CD4-positive, alpha-beta T cell (primary cell): ENCODE measurements at regions of chr7 and their contacts with region 1.

Region 1: GRCh38 chr7:86978808-86979506 is 80.5 kb downstream of the ELAPOR2 start:
- DNase-seq: peak in 6 of 14 experiments; percentile 5 to 90 (median 58)
- ATAC-seq: peak; percentile 90
- H3K4me3 ChIP-seq: no peak overlapping the region
- H3K4me3 Mint-ChIP-seq: peak overlapping the region; percentile 5
- H3K27ac ChIP-seq: peak overlapping the region; percentile 36 to 47
- H3K27ac Mint-ChIP-seq: peak overlapping the region; percentile 86
- H3K4me1 ChIP-seq: peaks cover 21% of the 10 kb centered on the region
- H3K4me1 Mint-ChIP-seq: peaks cover 54% of the 10 kb centered on the region
- H3K27me3 ChIP-seq: no peaks in the 10 kb centered on the region
- H3K27me3 Mint-ChIP-seq: no peaks in the 10 kb centered on the region
- CTCF ChIP-seq: no peak

Region 2: GRCh38 chr7:86918245-86918644 is 60.7 kb before region 1 on chr7:
- CTCF ChIA-PET with region 1: no interaction called
- POLR2A ChIA-PET with region 1: no interaction called
- intact Hi-C with region 1: no loop called
- DNase-seq: no peak
- ATAC-seq: no peak
- H3K4me3 ChIP-seq: no peak overlapping the region
- H3K4me3 Mint-ChIP-seq: no peak overlapping the region
- H3K27ac ChIP-seq: no peak overlapping the region
- H3K27ac Mint-ChIP-seq: no peak overlapping the region
- H3K4me1 ChIP-seq: no peaks in the 10 kb centered on the region
- H3K4me1 Mint-ChIP-seq: no peaks in the 10 kb centered on the region
- H3K27me3 ChIP-seq: no peaks in the 10 kb centered on the region
- H3K27me3 Mint-ChIP-seq: peaks cover 9% of the 10 kb centered on the region
- CTCF ChIP-seq: no peak

Region 3: GRCh38 chr7:87059525-87060287 is 80.7 kb after region 1 on chr7 and contains the start of gene ELAPOR2:
- CTCF ChIA-PET with region 1: no interaction called
- POLR2A ChIA-PET with region 1: interaction called, 4 read pairs
- intact Hi-C with region 1: loop called (anchors 2 to 5 kb)
- DNase-seq: peak; percentile 61 to 91 (median 76)
- ATAC-seq: peak; percentile 93
- H3K4me3 ChIP-seq: peak within 1 kb of the TSS; percentile 66
- H3K4me3 Mint-ChIP-seq: peak within 1 kb of the TSS; percentile 92
- H3K27ac ChIP-seq: no peak within 1 kb of the TSS
- H3K27ac Mint-ChIP-seq: peak within 1 kb of the TSS; percentile 75
- H3K4me1 ChIP-seq: peaks cover 12% of the 10 kb centered on the region
- H3K4me1 Mint-ChIP-seq: peaks cover 13% of the 10 kb centered on the region
- H3K27me3 ChIP-seq: peaks cover 0 to 3% of the 10 kb centered on the region in 2 experiments
- H3K27me3 Mint-ChIP-seq: peaks cover 13% of the 10 kb centered on the region
- CTCF ChIP-seq: peak; percentile 46
- total RNA-seq, gene ELAPOR2: 7.2 to 7.7 TPM